Activated CD8-positive, alpha-beta memory T cell treated with anti-CD3 and anti-CD28 coated beads, Interleukin-2, amount 10 ng/mL, durations not matched to agents 7 days and 5 days (primary cell): ENCODE measurements at regions of chr1 and their contacts with region 1.

Region 1: DNA sequence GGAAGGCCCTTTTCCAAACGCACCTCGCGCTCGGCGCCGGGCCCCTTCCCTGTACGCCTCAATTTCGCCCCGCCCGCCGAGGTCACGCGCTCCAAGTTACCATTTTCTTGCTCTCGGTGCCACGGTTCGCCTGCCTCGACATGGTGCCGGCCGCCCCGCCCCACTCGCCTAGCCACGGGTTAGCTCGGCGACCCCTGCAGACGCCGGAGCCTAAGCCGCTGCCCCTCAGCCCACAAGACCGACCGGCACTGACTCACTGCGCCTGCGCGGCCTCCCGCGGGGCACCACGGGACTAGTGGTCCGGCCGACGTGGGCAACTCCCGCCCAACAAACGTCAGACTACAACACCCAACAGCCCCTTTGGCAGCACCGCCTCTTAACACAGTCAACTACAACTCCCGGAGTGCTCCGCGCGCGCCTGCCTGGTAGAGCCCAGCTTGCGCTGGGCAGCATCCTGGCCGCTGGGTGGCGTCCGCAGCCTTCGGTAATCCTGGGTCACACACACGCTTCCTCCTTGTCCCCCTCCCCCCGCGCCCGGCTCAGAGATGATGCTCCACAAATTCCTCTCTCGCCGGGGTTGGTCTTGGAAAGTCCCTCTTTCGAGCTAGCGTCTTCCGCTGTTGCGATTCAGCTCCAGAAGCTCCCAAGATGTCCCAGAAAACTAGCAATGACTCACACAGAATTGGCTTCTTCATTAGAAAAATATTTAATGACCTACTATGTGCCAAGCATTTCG is at the start of gene TRAPPC3:
- DNase-seq: peak; percentile 100
- ATAC-seq: peak; percentile 92
- H3K4me3 Mint-ChIP-seq: peak within 1 kb of the TSS; percentile 93
- H3K27ac Mint-ChIP-seq: peak within 1 kb of the TSS; percentile 89
- H3K4me1 Mint-ChIP-seq: peaks cover 66% of the 10 kb centered on the region
- H3K27me3 Mint-ChIP-seq: no peaks in the 10 kb centered on the region
- total RNA-seq, gene TRAPPC3: 56.5 to 68.3 TPM

Region 2: DNA sequence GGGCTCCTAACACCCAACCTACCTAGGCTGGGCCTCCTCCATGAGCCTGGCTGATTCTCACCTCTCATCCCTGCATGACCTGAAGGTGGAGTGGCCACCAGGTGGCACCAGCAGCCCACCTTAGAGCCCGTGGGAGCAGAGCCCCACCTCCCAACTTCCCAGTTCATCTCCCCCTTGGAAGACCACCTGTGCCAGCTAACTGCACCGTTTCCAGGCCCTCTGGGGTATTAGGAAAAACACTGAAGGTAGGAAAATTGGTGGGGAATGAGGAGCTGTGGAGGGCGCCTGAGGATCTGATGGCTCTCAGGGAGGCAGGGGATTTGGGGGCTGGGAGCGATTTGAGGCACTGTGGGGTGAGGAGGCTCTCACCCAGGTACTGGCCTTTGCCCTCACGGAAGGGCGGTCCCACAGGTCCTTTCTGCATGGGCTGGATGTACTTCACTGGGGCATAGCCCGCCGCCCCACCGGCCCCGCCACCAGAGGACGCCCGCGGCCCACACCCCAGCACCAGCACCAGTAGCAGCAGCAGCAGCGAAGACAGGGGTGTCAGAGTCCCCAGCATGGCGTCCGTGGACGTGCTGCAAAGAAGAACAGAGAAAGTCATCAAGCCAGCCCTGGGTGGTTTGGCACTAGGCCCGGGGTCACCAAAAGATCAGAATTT is 49.6 kb before region 1 on chr1:
- CTCF ChIA-PET with region 1: interaction called, 11 read pairs
- DNase-seq: peak; percentile 85
- ATAC-seq: peak; percentile 93
- H3K4me3 Mint-ChIP-seq: no peak overlapping the region
- H3K27ac Mint-ChIP-seq: no peak overlapping the region
- H3K4me1 Mint-ChIP-seq: peaks cover 4% of the 10 kb centered on the region
- H3K27me3 Mint-ChIP-seq: no peaks in the 10 kb centered on the region

Region 3: DNA sequence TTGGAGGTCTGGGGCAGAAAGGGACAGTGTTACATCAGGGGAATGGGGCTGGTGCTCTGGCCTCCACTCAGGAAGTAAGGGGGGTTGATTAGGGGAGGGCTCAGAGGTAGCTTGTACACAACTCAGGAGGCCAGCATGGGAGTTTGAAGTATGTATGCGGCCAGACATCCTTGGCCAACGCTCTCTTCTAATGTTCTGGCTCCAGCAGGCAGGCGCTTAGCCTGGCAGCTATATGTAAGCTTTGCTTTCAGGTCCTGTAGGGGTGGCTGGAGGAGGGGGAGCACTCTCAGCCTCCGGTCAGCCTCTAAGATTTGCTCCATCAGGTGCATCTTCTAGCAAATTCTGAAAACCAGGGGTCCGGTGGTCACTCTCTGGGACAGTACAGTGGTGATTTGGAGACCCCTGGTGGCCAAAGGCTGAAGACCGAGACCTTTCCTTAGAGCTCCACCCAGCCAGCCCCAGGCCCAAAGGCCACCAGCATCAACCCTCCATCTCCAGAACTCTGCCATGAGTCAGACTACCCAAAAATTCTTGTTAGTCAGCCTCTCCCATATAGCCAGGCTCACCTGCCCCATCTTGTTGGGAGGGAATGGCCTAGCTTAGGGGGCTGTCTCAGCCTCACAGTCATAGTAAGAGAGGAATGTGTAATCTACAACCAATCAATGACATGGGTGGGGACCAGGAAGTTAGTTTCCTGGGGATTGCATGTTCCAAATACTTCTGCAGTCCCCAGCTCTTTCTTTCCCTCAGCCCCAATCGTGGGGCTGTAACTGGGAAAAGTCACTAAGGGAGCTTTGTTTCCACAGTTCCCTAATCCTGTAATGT is 14.7 kb before region 1 on chr1:
- CTCF ChIA-PET with region 1: interaction called, 48 read pairs
- DNase-seq: peak; percentile 63
- ATAC-seq: peak; percentile 80
- H3K4me3 Mint-ChIP-seq: no peak overlapping the region
- H3K27ac Mint-ChIP-seq: no peak overlapping the region
- H3K4me1 Mint-ChIP-seq: peaks cover 7% of the 10 kb centered on the region
- H3K27me3 Mint-ChIP-seq: no peaks in the 10 kb centered on the region

Region 4: DNA sequence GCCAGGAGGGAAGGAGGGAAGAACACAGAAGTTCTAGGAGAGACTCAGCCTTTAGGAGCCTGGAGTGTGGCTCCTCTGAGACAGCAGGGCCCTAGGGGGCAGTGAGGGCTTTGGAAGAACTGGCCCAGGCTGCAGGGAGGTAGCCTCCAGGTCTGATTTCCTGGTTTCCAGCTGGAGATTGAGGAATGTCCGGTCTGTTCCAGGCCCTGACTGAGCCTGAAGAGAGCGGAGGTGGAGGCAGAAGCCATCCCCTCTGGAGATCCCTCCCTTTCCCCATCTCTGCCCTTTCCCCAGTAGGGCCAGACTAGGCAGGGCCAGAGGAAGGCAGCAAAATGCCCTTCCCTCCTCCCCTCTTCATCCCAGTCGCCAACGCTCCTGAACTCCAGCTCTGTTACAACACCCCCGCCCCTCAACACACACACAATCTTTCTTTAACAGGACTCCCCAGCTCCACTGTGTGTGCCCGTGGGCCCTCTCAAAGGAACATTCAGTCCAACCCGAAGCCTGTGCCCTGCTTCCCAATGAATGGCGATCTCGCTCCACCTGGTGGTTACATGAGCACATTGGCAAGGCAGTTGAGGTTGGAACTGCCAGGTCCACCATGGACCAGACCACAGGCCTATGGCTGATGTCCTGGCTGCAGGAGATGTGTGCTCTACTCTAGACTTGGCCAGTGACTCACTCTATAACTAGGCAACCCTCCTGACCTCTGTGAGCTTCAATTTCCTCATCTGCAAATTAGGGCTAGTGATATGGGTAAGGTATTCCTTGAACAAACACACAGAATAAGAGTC is 38.6 kb after region 1 on chr1:
- CTCF ChIA-PET with region 1: interaction called, 145 read pairs
- DNase-seq: peak; percentile 89
- ATAC-seq: peak; percentile 97
- H3K4me3 Mint-ChIP-seq: no peak overlapping the region
- H3K27ac Mint-ChIP-seq: peak overlapping the region; percentile 37
- H3K4me1 Mint-ChIP-seq: peaks cover 4% of the 10 kb centered on the region
- H3K27me3 Mint-ChIP-seq: no peaks in the 10 kb centered on the region

Region 5: GRCh38 chr1:36279110-36279788 is 129.8 kb after region 1 on chr1:
- CTCF ChIA-PET with region 1: interaction called, 13 read pairs
- DNase-seq: no peak
- ATAC-seq: no peak
- H3K4me3 Mint-ChIP-seq: no peak overlapping the region
- H3K27ac Mint-ChIP-seq: no peak overlapping the region
- H3K4me1 Mint-ChIP-seq: peaks cover 14% of the 10 kb centered on the region
- H3K27me3 Mint-ChIP-seq: no peaks in the 10 kb centered on the region

Region 6: GRCh38 chr1:36306902-36307456 is 157.6 kb after region 1 on chr1:
- CTCF ChIA-PET with region 1: interaction called, 10 read pairs
- DNase-seq: peak; percentile 95
- ATAC-seq: peak; percentile 99
- H3K4me3 Mint-ChIP-seq: peak overlapping the region; percentile 89
- H3K27ac Mint-ChIP-seq: peak overlapping the region; percentile 87
- H3K4me1 Mint-ChIP-seq: peaks cover 32% of the 10 kb centered on the region
- H3K27me3 Mint-ChIP-seq: no peaks in the 10 kb centered on the region

Region 7: GRCh38 chr1:36420836-36421664 is 271.6 kb after region 1 on chr1:
- CTCF ChIA-PET with region 1: interaction called, 12 read pairs
- DNase-seq: peak; percentile 95
- ATAC-seq: peak; percentile 98
- H3K4me3 Mint-ChIP-seq: no peak overlapping the region
- H3K27ac Mint-ChIP-seq: peak overlapping the region; percentile 60
- H3K4me1 Mint-ChIP-seq: peaks cover 16% of the 10 kb centered on the region
- H3K27me3 Mint-ChIP-seq: no peaks in the 10 kb centered on the region